Mammary epithelial cell (primary cell): ENCODE measurements at regions of chr7 and their contacts with region 1.

Region 1: DNA sequence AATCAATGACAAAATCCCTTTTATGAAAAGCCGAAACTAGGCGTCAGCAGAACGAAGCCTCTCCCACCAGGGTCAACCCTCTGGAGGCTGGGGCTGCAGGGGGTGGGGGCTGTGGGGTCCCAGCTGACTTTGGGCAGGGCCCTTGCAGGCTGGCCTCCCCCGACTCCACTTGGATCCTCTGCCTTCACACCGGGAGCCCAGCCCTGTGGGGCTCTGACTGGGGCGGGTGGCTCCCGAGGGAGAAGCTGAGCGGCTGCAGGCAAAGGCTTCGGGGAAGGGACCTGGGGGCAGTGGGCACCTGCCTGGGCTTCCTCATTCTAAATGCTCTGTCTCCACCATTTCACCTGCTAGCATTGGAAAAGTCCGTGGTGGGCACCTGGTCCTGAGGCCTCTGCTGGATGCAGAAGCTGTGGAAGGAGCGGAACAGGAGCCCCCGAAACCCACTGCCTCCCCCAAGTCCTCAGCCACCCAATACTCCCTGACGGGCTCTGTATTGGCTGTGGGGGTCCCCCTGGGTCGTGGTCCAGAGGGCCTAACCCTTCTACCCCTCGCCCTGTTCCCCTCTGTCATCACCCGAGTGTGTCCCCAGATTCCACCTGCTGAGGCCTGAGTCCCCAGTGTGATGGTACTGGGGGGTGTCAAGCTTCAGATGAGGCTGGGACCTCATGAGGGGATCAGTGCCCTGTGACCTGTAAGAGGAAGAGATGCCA is 108.6 kb downstream of the DNAJB6 start:
- DNase-seq: no peak
- H3K4me3 ChIP-seq: no peak overlapping the region
- H3K27ac ChIP-seq: no peak overlapping the region
- H3K4me1 ChIP-seq: no peaks in the 10 kb centered on the region
- H3K27me3 ChIP-seq: no peaks in the 10 kb centered on the region
- CTCF ChIP-seq: no peak

Region 2: DNA sequence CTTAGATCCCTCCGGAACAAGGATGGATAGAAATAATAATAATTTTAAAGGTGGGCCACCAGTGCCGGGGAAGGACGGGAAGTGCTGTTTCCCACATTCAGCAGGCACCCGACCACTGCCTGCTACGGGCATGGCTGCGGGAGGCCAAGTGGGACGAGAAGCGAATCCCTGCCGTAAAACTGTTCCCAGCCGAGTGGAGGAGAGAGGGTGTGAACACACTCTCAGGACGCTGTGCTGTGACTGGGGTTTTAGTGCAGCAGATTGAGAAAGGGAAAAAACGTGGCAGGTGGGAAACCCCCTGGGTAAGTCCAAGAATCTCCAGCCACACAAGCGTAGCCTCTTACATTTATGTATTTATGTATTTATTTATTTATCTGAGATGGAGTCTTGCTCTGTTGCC is 50.2 kb after region 1 on chr7:
- CTCF ChIA-PET with region 1: no interaction called
- dilution Hi-C with region 1: loop called (anchors 5 kb)
- in situ Hi-C with region 1: no loop called
- intact Hi-C with region 1: no loop called
- DNase-seq: no peak
- H3K4me3 ChIP-seq: no peak overlapping the region
- H3K27ac ChIP-seq: no peak overlapping the region
- H3K4me1 ChIP-seq: no peaks in the 10 kb centered on the region
- H3K27me3 ChIP-seq: no peaks in the 10 kb centered on the region
- CTCF ChIP-seq: no peak